ENCODE measurements at regions of chr3 and their contacts with region 1.

Region 1: GRCh38 chr3:16177962-16178627 is 3.6 kb downstream of the GALNT15 start:
- DNase-seq: peak; percentile 62
- H3K27ac ChIP-seq: no peak overlapping the region
- CTCF ChIP-seq: peak; percentile 96

Region 2: DNA sequence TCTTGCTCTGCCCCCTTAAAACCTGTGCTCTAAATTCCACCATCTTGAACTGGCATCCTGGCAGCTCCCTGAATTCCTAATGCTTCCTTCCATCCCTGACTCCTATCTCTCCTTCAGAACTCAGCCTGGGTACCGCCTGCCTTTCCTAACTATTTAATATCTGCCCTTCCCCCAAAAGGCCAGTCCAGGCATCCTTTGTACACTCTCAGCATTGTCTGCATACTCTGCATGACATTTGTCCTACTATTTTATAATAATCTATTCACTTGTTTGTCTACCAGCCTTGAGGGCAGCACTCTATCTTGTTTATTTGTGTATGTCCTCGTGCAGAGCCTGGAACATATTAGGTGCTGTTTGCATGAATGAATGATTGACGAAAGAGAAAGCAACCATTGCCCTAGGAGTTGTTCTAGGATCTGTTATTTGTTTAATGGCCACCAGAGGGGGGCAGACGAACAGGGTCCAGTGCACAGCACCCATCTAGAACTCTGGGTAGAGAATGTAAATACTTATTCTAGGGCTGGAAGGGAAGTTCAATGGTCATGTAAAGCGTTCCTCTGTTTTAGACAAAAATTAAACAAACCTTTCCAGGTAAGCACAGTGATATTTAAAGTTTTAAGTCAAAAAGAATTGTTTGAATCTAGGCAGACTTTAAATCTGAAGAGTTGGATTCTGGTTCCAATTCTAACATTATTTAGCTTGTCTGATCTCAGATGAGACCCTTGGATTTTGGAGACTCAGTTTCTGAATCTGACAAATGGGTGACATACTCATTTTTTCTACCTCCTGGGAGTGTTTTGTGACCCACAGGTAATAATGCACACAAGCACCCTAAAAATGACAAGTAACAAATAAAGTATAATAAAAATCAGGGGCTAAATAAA is 129.4 kb before region 1 on chr3:
- CTCF ChIA-PET with region 1: interaction called, 19 read pairs
- POLR2A ChIA-PET with region 1: no interaction called
- DNase-seq: peak; percentile 59
- H3K27ac ChIP-seq: no peak overlapping the region
- CTCF ChIP-seq: peak; percentile 82

Region 3: GRCh38 chr3:16140116-16140893 is 37.8 kb before region 1 on chr3:
- CTCF ChIA-PET with region 1: no interaction called
- POLR2A ChIA-PET with region 1: no interaction called
- DNase-seq: peak; percentile 4
- H3K27ac ChIP-seq: no peak overlapping the region
- CTCF ChIP-seq: no peak

Region 4: GRCh38 chr3:16378920-16379319 is 200.8 kb after region 1 on chr3:
- CTCF ChIA-PET with region 1: no interaction called
- POLR2A ChIA-PET with region 1: no interaction called
- DNase-seq: no peak
- H3K27ac ChIP-seq: no peak overlapping the region
- CTCF ChIP-seq: no peak

Measured in RWPE1 (cell line).